ENCODE measurements at regions of chr18 and their contacts with region 1.

Region 1: DNA sequence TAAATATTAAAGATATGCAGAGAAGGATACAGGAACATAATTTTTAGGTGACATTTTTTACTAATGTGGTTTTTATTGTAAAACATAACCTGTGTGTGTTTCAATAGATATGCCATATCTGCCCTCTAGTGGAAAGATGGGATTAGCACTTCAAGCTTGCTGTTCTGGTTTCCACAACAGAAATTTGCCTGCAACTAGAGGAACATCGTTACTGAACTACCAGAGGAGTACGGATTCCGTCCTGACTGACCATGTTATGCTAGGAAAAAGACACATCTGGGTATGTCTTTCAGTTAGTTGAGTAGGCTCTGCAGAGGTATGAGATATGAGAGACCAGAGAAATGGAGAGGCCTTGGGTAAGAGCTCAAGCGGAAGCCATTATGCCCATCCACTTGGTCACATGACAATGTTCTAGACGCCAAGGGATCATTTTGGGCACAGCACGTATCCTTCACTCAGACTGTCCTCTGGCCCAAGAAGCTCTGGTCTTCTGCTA is 104.9 kb downstream of the MBD2 start:
- DNase-seq: peak; percentile 59
- ATAC-seq: peak; percentile 96
- H3K4me3 ChIP-seq: no peak overlapping the region
- H3K27ac ChIP-seq: no peak overlapping the region
- H3K4me1 ChIP-seq: no peaks in the 10 kb centered on the region
- H3K27me3 ChIP-seq: no peaks in the 10 kb centered on the region
- CTCF ChIP-seq: peak; percentile 74 to 85 (median 79)
- EP300 ChIP-seq: no peak
- POLR2A ChIP-seq: no peak
- RAD21 ChIP-seq: peak; percentile 84

Region 2: DNA sequence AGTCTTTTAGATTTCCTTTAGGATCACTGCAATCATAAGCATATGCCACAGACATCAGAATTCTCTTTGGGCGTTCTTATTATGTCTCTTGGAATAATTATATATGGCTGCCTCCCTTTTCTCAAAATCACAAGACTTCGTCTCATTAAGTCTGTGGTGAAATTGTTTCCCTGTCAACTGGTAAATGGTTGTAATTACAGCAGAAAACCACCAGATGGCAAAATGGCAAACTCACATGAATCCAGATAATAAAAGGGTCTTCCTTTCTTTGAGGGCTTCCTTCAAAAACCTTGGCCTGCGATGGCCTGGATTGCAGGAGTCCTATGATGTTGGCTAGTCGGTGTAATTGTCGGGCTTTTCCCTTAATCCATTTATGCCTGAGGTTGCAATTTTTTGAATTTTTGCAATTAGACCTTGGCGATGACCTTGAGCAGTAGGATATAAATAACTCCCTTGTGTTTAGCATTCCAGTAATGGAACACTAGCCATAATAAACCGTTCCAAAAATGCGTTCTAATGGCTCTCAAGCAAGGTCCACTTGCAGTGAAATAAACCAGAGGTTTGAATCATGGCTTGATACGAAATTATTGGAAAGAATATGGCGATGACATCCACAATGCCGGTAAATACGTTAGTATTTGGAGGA is 551.5 kb before region 1 on chr18:
- CTCF ChIA-PET with region 1: interaction called, 21 read pairs
- POLR2A ChIA-PET with region 1: no interaction called
- RAD21 ChIA-PET with region 1: interaction called, 10 read pairs
- SMC1A ChIA-PET with region 1: interaction called, 8 read pairs
- in situ Hi-C with region 1: loop called (anchors 5 kb)
- intact Hi-C with region 1: loop called (anchors 1 kb)
- DNase-seq: no peak
- ATAC-seq: peak; percentile 52; the same call in 2 of the 3 replicates
- H3K4me3 ChIP-seq: no peak overlapping the region
- H3K27ac ChIP-seq: no peak overlapping the region
- H3K4me1 ChIP-seq: no peaks in the 10 kb centered on the region
- H3K27me3 ChIP-seq: no peaks in the 10 kb centered on the region
- CTCF ChIP-seq: peak; percentile 45 to 56 (median 49); a peak in 5 of 6 replicates
- EP300 ChIP-seq: no peak
- POLR2A ChIP-seq: no peak
- RAD21 ChIP-seq: peak; percentile 60

Region 3: GRCh38 chr18:53698907-53699306 is 420.7 kb before region 1 on chr18:
- CTCF ChIA-PET with region 1: interaction called, 15 read pairs
- POLR2A ChIA-PET with region 1: no interaction called
- RAD21 ChIA-PET with region 1: interaction called, 5 read pairs
- SMC1A ChIA-PET with region 1: interaction called, 6 read pairs
- in situ Hi-C with region 1: no loop called
- intact Hi-C with region 1: loop called (anchors 1 kb)
- DNase-seq: no peak
- ATAC-seq: peak; percentile 72
- H3K4me3 ChIP-seq: no peak overlapping the region
- H3K27ac ChIP-seq: no peak overlapping the region
- H3K4me1 ChIP-seq: no peaks in the 10 kb centered on the region
- H3K27me3 ChIP-seq: no peaks in the 10 kb centered on the region
- CTCF ChIP-seq: peak; percentile 30 to 44 (median 39); a peak in 5 of 6 replicates
- EP300 ChIP-seq: no peak
- POLR2A ChIP-seq: no peak
- RAD21 ChIP-seq: peak; percentile 35

Region 4: GRCh38 chr18:53909668-53910067 is 209.9 kb before region 1 on chr18:
- CTCF ChIA-PET with region 1: interaction called, 75 read pairs
- POLR2A ChIA-PET with region 1: no interaction called
- RAD21 ChIA-PET with region 1: interaction called, 22 read pairs
- SMC1A ChIA-PET with region 1: interaction called, 22 read pairs
- in situ Hi-C with region 1: loop called (anchors 5 kb)
- intact Hi-C with region 1: loop called (anchors 1 kb)
- DNase-seq: no peak
- ATAC-seq: peak; percentile 91
- H3K4me3 ChIP-seq: no peak overlapping the region
- H3K27ac ChIP-seq: no peak overlapping the region
- H3K4me1 ChIP-seq: no peaks in the 10 kb centered on the region
- H3K27me3 ChIP-seq: 0 out of 4 replicates have a peak, but pooled peaks cover 0 to 2% of the 10 kb centered on the region in 2 experiments
- CTCF ChIP-seq: peak; percentile 57 to 64 (median 60)
- EP300 ChIP-seq: no peak
- POLR2A ChIP-seq: no peak
- RAD21 ChIP-seq: peak; percentile 64

Region 5: DNA sequence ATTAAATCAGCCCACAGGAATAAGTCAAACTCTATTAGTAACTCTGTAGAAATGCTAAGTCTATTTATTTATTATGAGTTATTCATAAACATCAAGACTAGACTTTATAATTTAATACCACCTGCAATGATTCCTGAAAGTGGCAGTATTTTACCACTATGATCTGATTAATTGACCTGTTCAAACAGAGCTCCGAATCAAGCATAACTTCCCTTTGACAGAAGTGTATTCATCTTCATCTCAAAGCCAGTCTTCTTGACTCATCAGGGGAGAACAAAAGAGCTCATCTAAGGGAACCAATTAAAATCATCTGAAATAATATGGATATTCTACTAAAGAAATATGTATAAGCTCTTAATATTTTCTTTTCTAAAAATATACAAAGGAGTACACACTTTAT is 17.4 kb before region 1 on chr18:
- CTCF ChIA-PET with region 1: interaction called, 14 read pairs
- POLR2A ChIA-PET with region 1: no interaction called
- RAD21 ChIA-PET with region 1: no interaction called
- SMC1A ChIA-PET with region 1: interaction called, 5 read pairs
- in situ Hi-C with region 1: no loop called
- intact Hi-C with region 1: no loop called
- DNase-seq: no peak
- ATAC-seq: no peak
- H3K4me3 ChIP-seq: no peak overlapping the region
- H3K27ac ChIP-seq: no peak overlapping the region
- H3K4me1 ChIP-seq: no peaks in the 10 kb centered on the region
- H3K27me3 ChIP-seq: no peaks in the 10 kb centered on the region
- CTCF ChIP-seq: no peak
- EP300 ChIP-seq: no peak
- POLR2A ChIP-seq: no peak
- RAD21 ChIP-seq: no peak

Region 6: GRCh38 chr18:54109131-54109683 is 10.4 kb before region 1 on chr18:
- CTCF ChIA-PET with region 1: interaction called, 14 read pairs
- POLR2A ChIA-PET with region 1: no interaction called
- RAD21 ChIA-PET with region 1: no interaction called
- SMC1A ChIA-PET with region 1: interaction called, 4 read pairs
- in situ Hi-C with region 1: no loop called
- intact Hi-C with region 1: no loop called
- DNase-seq: no peak
- ATAC-seq: no peak
- H3K4me3 ChIP-seq: no peak overlapping the region
- H3K27ac ChIP-seq: no peak overlapping the region
- H3K4me1 ChIP-seq: no peaks in the 10 kb centered on the region
- H3K27me3 ChIP-seq: no peaks in the 10 kb centered on the region
- CTCF ChIP-seq: no peak
- EP300 ChIP-seq: no peak
- POLR2A ChIP-seq: no peak
- RAD21 ChIP-seq: no peak

Region 7: DNA sequence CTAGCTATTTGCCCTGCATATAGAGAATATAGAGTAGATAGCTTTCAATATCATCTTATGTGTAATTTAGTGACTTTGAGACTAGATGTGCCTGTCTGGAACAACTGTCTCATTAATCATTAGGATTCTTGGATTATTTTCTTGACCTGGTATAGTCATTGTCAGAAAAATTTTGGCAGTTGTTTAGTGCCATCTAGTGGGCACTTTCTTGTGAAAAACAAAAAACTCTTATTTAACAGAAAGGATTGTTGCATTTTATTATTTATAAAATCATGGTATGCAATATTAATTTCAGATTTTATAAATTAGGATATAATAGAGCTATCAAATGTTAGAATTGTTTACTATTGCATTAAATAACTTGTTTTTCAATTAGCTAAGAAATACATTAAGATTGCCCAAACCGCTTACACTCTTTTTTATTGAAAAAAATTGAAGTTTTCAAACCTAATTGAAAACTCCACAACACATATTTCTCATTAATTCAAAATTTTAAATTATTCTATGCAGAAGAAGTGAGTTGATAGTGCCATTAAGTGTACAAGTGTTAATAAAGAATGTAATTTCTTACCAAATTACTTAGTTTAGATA is 551.8 kb after region 1 on chr18:
- CTCF ChIA-PET with region 1: no interaction called
- POLR2A ChIA-PET with region 1: no interaction called
- RAD21 ChIA-PET with region 1: no interaction called
- SMC1A ChIA-PET with region 1: interaction called, 3 read pairs
- in situ Hi-C with region 1: no loop called
- intact Hi-C with region 1: loop called (anchors 5 kb)
- DNase-seq: no peak
- ATAC-seq: 0 out of 3 replicates have a peak, but pooled peaks have one; percentile 21
- H3K4me3 ChIP-seq: no peak overlapping the region
- H3K27ac ChIP-seq: no peak overlapping the region
- H3K4me1 ChIP-seq: no peaks in the 10 kb centered on the region
- H3K27me3 ChIP-seq: no peaks in the 10 kb centered on the region
- CTCF ChIP-seq: peak; percentile 20 to 50 (median 39); a peak in 3 of 6 replicates
- EP300 ChIP-seq: no peak
- POLR2A ChIP-seq: no peak
- RAD21 ChIP-seq: peak; percentile 71

Measured in GM12878 (cell line).